ENCODE measurements at regions of chr5 and their contacts with region 1.

Region 1: DNA sequence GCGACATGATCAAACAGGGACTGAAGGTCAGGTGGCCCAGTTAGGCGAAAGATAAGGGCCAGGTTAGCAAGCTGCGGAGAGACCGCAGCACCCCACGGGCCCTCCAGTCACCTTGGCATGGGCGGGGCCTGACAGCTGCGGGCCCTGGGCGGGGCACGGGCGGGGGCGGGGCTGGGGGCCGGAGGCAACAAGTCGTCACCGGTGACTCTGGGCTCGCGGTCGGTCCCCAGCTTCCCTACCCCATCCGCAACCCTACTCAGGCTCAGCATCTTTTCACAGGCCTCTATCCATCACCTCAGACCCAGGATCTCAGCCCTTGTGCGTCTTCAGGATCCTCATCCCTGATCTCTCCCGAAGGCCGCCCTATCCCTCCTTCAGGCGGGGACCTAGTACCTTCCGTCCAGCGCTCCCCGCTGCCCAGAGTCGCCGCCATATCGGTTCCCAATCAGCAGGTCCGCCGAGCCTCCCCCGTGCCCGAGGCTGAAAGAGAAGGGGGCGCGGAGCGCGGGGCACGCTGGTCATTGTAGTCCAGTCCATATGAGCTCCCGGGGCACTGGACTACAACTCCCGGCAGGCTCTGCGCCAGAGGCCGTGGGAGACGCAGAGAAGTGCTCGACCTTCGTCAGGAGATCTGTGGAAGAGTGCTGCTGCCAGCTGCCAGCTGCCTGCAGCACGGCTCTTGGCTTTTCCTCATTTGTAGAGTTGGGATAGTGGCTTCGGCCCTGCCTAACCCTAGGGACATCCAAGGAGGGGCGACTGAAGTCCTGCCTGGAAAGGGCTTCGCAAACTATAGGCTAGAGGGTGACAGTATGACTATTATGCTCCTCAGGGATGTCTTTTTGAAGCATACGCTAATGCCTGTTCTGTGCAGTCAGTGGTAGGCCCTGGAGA is at the start of gene DNAJC18:
- DNase-seq: peak; percentile 83 to 98
- H3K4me3 ChIP-seq: peak within 1 kb of the TSS; percentile 69 to 74
- H3K27ac ChIP-seq: peak within 1 kb of the TSS; percentile 90 to 94
- H3K4me1 ChIP-seq: peaks cover 5 to 9% of the 10 kb centered on the region in 2 donors
- H3K27me3 ChIP-seq: no peaks in the 10 kb centered on the region
- CTCF ChIP-seq: no peak
- total RNA-seq, gene DNAJC18: 8.4 TPM

Region 2: GRCh38 chr5:139120521-139120920 is 318.7 kb before region 1 on chr5:
- intact Hi-C with region 1: no loop called
- DNase-seq: peak in 1 of 2 donors; percentile 79
- H3K4me3 ChIP-seq: peak overlapping the region in 1 of 2 donors; percentile 53
- H3K27ac ChIP-seq: peak overlapping the region; percentile 35 to 83
- H3K4me1 ChIP-seq: peaks cover 22 to 61% of the 10 kb centered on the region in 2 donors
- H3K27me3 ChIP-seq: no peaks in the 10 kb centered on the region
- CTCF ChIP-seq: no peak

Region 3: GRCh38 chr5:139403787-139404483 is 35.3 kb before region 1 on chr5 and contains the start of gene SPATA24:
- intact Hi-C with region 1: loop called (anchors 2 kb)
- DNase-seq: peak; percentile 94 to 99
- H3K4me3 ChIP-seq: peak within 1 kb of the TSS; percentile 61 to 62
- H3K27ac ChIP-seq: peak within 1 kb of the TSS; percentile 88 to 90
- H3K4me1 ChIP-seq: peaks cover 0 to 10% of the 10 kb centered on the region in 2 donors
- H3K27me3 ChIP-seq: no peaks in the 10 kb centered on the region
- CTCF ChIP-seq: no peak
- total RNA-seq, gene SPATA24: not detected

Region 4: DNA sequence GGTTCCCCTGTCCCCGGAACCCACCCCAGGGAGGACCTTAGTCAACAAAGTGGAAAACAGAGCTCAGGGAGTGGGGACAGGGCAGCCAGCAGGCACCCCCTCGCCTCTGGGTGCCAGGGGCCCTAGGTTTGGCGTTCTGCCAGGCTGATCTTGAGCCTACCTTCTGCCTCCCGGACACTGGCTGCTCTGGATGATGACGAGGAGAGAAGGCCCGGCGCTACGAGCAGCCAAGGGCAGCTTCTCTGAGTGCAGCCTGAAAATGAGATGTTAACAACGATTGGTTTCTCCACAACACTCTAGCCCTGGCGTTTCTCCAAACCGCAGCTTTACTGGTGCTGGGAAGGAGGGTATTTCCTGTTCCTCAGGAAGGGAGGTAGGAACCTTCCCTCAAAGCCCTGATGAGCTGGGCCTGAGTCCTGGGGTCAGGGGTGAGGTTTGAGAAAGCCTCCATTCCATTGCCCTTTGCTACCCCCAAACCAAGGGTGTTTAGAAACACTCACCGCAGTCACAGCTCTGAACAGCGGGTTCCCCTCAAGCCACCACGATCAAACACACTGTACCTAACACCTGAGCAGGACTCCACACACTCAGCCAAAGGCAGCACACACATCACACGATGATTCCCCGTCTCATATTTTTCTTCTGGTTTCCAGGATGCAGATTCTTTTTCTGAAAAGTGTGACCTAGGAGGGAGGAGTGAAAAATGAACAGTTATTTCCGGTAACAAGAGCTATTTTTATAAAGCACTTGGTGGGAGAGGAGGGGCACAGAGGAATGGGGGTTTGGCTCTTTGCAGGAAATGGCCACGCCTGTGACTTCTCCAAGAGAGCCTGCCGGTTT is 43.0 kb after region 1 on chr5 and contains the start of gene STING1:
- intact Hi-C with region 1: loop called (anchors 1 kb)
- DNase-seq: peak; percentile 53 to 93
- H3K4me3 ChIP-seq: peak within 1 kb of the TSS; percentile 64 to 74
- H3K27ac ChIP-seq: peak within 1 kb of the TSS; percentile 96 to 98
- H3K4me1 ChIP-seq: peaks cover 4 to 27% of the 10 kb centered on the region in 2 donors
- H3K27me3 ChIP-seq: no peaks in the 10 kb centered on the region
- CTCF ChIP-seq: no peak
- total RNA-seq, gene STING1: 179 TPM

Region 5: DNA sequence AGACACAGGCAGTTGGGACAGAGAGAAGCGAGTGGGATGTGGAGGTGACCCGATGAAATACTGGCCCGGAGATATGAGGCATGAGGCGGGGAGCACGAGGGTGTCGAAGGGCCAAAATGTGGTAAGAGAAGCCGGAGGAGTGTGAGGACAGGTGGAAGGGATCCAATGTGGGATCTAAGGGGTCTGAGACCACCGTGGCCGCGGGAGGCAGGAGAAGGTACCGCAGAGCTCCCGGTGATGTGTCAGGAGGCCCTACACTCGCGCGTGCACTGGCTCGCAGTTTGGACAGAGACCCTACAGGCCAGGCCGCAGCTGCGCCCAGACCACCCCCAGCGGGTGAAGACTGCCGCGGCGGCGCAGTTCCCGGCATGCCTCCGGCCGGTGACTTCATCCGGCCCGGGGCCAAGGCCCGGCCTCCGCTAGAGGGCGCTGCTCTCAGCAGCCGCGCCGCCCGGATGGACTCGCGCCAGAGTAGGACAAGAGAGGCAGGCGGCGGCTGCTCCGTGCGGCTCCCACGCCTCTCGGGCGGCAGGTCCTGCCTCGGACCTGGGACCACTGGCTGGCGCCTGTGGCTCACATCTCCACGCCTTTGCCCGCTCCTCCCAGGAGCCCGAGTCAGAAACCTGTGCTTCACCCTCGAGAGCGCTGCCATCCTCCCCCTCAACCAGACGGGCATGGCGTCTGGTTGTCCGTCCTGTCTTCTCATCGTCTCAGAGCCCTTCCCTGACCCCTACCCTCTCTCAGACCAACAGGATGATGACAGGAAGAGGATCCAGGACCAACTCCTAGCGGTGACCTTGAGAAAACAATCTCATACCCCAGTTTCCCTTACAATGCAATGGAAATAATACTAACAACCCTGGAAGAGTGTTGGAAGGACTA is 78.7 kb after region 1 on chr5:
- intact Hi-C with region 1: loop called (anchors 2 kb)
- DNase-seq: peak; percentile 62 to 96
- H3K4me3 ChIP-seq: peak overlapping the region; percentile 66 to 68
- H3K27ac ChIP-seq: peak overlapping the region; percentile 77 to 83
- H3K4me1 ChIP-seq: peaks cover 0 to 2% of the 10 kb centered on the region in 2 donors
- H3K27me3 ChIP-seq: no peaks in the 10 kb centered on the region
- CTCF ChIP-seq: peak; percentile 95 to 99 (median 98)

Region 6: DNA sequence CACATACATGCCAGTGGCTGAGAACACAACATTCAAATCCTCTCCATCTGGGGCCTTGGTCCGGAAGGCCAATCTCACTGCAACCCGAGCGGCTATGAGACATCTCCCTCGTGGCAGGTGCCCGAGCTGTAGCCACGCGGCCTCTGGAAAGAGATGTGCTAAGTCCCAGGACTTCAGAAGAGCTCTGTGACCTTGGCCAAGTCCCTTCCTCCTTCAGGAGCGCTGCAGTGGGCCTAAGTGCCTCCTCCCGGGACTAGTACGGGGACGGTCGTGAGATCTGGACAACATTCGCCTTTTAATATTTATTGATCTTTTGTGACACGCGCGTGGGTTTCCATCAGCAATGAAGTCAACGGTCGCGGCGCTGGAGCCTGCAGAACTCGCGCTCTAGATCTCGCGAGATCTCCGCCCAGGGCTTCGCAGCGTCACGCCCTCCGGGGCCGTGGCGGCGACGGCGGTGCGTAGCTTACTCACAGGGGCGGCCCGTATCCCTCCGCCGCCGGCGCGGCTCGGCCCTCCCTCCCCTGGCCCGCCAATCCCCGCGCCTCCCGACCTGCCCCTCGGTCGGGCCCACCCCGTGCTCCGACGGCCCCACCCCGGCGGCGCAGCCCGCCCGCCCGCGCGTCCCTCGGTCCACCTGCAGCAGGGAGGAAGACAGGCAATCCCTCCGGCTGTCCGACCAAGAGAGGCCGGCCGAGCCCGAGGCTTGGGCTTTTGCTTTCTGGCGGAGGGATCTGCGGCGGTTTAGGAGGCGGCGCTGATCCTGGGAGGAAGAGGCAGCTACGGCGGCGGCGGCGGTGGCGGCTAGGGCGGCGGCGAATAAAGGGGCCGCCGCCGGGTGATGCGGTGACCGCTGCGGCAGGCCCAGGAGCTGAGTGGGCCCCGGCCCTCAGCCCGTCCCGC is 121.7 kb after region 1 on chr5 and contains the start of gene UBE2D2:
- intact Hi-C with region 1: loop called (anchors 5 kb)
- DNase-seq: peak; percentile 78 to 98
- H3K4me3 ChIP-seq: peak within 1 kb of the TSS; percentile 86 to 91
- H3K27ac ChIP-seq: peak within 1 kb of the TSS; percentile 96 to 99
- H3K4me1 ChIP-seq: peaks cover 14 to 38% of the 10 kb centered on the region in 2 donors
- H3K27me3 ChIP-seq: no peaks in the 10 kb centered on the region
- CTCF ChIP-seq: no peak
- total RNA-seq, gene UBE2D2: 65.9 TPM